ENCODE measurements at regions of chr10 and their contacts with region 1.

Region 1: GRCh38 chr10:71957546-71958275 is 6.5 kb upstream of the CHST3 start:
- DNase-seq: no peak
- H3K4me3 ChIP-seq: no peak overlapping the region
- H3K27ac ChIP-seq: no peak overlapping the region
- H3K4me1 ChIP-seq: no peaks in the 10 kb centered on the region
- H3K27me3 ChIP-seq: no peaks in the 10 kb centered on the region
- CTCF ChIP-seq: no peak
- EP300 ChIP-seq: no peak
- POLR2A ChIP-seq: no peak

Region 2: DNA sequence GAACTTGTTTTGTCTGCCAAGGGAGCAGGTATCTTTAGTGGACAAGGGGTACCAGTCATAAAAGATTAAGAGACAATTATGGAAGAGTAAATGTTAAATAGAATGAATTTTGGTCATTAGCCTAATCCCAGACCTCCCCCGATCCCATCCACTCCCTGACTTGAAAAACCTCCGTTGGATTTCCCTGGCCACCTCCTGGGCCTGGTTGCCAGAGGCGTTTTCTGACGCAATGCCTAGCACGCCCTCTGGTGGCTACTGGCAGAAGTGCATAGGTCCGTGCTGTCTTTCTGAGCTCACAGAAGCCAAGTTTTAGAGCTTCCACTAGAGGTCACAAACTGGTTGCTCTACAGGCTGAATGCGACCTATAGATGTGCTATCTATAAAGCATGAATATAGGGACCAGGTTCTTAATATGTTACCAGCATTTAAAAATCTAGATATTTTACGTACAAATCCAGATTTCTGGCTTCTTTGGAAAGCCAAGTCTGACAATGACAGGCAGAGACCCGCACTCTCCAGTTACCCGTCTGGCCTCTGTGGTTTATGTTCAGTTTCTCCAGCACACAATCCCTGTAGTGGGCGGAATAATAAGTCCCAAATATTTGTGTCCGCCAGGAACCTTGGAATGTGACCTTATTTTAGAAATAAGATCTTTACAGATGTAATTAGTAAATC is 90.9 kb after region 1 on chr10:
- intact Hi-C with region 1: loop called (anchors 2 to 5 kb)
- DNase-seq: peak; percentile 90 to 97 (median 96)
- H3K4me3 ChIP-seq: no peak overlapping the region
- H3K27ac ChIP-seq: no peak overlapping the region
- H3K4me1 ChIP-seq: peaks cover 5% of the 10 kb centered on the region
- H3K27me3 ChIP-seq: no peaks in the 10 kb centered on the region
- CTCF ChIP-seq: peak; percentile 96 to 100 (median 100)
- EP300 ChIP-seq: no peak
- POLR2A ChIP-seq: peak; percentile 33